ENCODE measurements at regions of chr19 and their contacts with region 1.

Region 1: GRCh38 chr19:35995048-35995993 is at the start of gene SDHAF1:
- DNase-seq: peak; percentile 97
- H3K4me3 Mint-ChIP-seq: peak within 1 kb of the TSS; percentile 93
- H3K27ac Mint-ChIP-seq: peak within 1 kb of the TSS; percentile 89
- H3K4me1 Mint-ChIP-seq: peaks cover 38% of the 10 kb centered on the region
- H3K27me3 Mint-ChIP-seq: no peaks in the 10 kb centered on the region
- total RNA-seq, gene SDHAF1: 15.8 to 18.9 TPM

Region 2: GRCh38 chr19:35899547-35900214 is 95.6 kb before region 1 on chr19:
- CTCF ChIA-PET with region 1: no interaction called
- POLR2A ChIA-PET with region 1: no interaction called
- intact Hi-C with region 1: loop called (anchors 1 kb)
- DNase-seq: peak; percentile 93
- H3K4me3 Mint-ChIP-seq: peak overlapping the region; percentile 92
- H3K27ac Mint-ChIP-seq: peak overlapping the region; percentile 97
- H3K4me1 Mint-ChIP-seq: peaks cover 59% of the 10 kb centered on the region
- H3K27me3 Mint-ChIP-seq: no peaks in the 10 kb centered on the region

Region 3: GRCh38 chr19:35959040-35959967 is 36.0 kb before region 1 on chr19:
- CTCF ChIA-PET with region 1: interaction called, 4 read pairs
- POLR2A ChIA-PET with region 1: no interaction called
- intact Hi-C with region 1: loop called (anchors 5 kb)
- DNase-seq: peak; percentile 85
- H3K4me3 Mint-ChIP-seq: peak overlapping the region; percentile 49
- H3K27ac Mint-ChIP-seq: no peak overlapping the region
- H3K4me1 Mint-ChIP-seq: peaks cover 29% of the 10 kb centered on the region
- H3K27me3 Mint-ChIP-seq: peaks cover 3% of the 10 kb centered on the region

Region 4: GRCh38 chr19:36014029-36014924 is 19.0 kb after region 1 on chr19 and contains the start of gene ALKBH6:
- CTCF ChIA-PET with region 1: interaction called, 8 read pairs
- POLR2A ChIA-PET with region 1: interaction called, 12 read pairs
- intact Hi-C with region 1: loop called (anchors 2 kb)
- DNase-seq: peak; percentile 100
- H3K4me3 Mint-ChIP-seq: peak within 1 kb of the TSS; percentile 99
- H3K27ac Mint-ChIP-seq: peak within 1 kb of the TSS; percentile 95
- H3K4me1 Mint-ChIP-seq: peaks cover 36% of the 10 kb centered on the region
- H3K27me3 Mint-ChIP-seq: no peaks in the 10 kb centered on the region
- total RNA-seq, gene ALKBH6: 40.9 to 44.7 TPM

Region 5: DNA sequence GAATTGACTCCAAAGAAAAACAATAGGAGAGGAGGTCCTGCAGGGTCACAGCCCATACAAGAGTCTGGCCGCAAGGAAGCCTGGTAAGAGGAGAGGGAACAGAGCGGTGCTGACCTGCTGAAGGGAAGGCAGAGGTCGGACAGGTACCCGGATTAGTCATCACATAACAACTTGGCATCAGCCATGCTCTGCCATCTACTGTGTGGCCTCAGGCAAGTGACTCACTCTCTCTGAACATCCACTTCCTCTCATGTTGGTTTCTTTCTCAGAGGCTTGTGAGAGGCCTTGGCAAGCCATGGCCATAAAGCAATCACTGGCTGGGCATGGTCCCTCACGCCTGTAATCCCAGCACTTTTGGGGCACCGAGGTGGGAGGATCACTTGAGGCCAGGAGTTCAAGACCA is 137.2 kb after region 1 on chr19:
- CTCF ChIA-PET with region 1: interaction called, 3 read pairs
- POLR2A ChIA-PET with region 1: no interaction called
- intact Hi-C with region 1: loop called (anchors 5 kb)
- DNase-seq: peak; percentile 72
- H3K4me3 Mint-ChIP-seq: no peak overlapping the region
- H3K27ac Mint-ChIP-seq: peak overlapping the region; percentile 86
- H3K4me1 Mint-ChIP-seq: peaks cover 34% of the 10 kb centered on the region
- H3K27me3 Mint-ChIP-seq: no peaks in the 10 kb centered on the region

Measured in activated CD4-positive, alpha-beta memory T cell treated with anti-CD3 and anti-CD28 coated beads for 36 hours (primary cell).